ENCODE measurements at regions of chr1 and their contacts with region 1.

Region 1: DNA sequence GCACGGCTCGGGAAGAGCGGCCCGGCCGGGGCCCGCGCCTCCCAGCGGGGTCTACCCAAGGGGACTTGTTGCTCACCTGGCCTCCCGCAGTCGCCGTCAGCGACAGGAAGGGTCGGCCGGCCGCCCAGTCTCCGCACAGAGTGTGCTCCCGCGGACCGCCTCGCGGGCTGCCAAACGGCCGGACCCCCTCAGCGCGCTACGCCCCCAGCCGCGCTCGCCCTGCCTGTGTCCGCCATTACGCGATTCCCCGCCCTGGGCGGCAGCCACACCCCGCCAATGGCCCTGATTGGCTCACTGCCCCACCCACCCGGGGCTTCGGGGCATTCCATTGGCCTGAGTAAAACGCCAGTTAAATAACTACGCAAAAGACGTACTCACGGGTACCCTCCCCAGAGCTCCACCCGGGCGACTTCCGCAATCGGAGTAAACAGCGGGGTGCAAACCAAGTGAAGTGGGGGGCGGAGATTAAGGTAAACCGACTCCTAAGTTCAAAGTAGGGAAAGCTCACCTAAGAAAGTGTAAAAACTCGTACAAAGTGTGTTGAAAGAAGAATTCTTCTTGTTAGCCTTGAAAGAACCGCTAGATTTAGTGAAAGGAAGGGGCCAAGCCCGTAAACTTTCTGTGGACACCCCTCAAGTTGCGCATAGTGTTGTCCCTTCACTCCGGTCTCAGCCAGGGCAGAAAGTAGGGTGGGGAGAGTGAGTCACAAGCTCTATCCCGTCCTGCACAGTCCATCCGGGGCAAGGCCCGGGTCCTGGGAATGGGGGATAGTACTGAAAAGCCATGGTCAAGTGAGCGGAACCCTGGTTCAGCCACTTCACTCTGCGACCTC is at the start of gene WASF2:
- DNase-seq: peak; percentile 93 to 99 (median 98)
- ATAC-seq: peak; percentile 96
- H3K4me3 ChIP-seq: peak within 1 kb of the TSS; percentile 79
- H3K27ac ChIP-seq: peak within 1 kb of the TSS; percentile 99
- H3K4me1 ChIP-seq: peaks cover 8 to 25% of the 10 kb centered on the region in 2 experiments; a peak in 4 of 5 replicates
- H3K27me3 ChIP-seq: no peaks in the 10 kb centered on the region
- CTCF ChIP-seq: no peak; a peak in 1 of 6 replicates
- EP300 ChIP-seq: peak; percentile 5
- POLR2A ChIP-seq: peak; percentile 92
- RAD21 ChIP-seq: 0 out of 4 replicates have a peak, but pooled peaks of 1 of the 2 experiments have one; percentile 13
- polyA plus RNA-seq, gene WASF2: 8.2 to 9.7 TPM

Region 2: DNA sequence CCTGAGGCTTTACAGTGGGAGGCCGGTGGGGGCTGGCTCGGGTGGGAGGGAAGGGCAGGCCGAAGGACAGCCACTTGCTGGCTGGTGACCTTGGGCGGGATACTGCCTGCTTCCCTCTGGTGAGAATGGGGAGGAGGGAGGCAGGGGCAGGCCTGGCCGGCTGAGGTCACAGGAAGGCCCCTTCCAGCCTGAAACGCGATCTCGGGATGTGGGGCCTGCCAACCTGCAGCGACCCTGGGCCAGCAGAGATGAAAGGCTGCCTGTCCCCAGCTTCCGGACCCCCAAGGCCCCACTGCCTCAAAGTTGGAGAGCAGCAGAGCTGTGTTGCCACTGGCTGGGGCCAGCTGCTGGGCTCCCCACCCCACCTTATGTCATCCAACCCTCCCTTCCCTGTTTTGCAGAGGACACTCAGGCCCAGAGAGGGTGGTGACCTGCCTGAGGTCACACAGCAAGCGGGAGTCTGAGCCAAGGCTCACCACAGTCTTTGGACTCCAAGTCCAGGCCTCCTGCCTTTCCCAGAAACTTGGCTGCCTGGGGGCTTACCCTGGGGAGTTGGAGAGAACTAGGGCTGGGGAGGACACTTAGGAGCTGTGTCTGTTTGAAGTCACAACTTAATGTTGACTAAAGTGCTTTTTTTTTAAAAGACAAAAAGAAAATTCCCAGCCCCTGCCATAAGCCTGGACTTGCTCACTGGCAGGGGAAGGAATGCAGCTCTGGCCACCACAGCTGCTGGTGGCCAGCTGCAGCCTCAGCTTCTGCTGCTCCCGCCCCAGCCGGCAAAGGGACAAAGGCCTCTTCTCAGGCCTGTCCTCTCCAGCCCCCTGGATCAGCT is 14.7 kb after region 1 on chr1:
- CTCF ChIA-PET with region 1: no interaction called
- POLR2A ChIA-PET with region 1: interaction called, 17 read pairs
- in situ Hi-C with region 1: no loop called
- intact Hi-C with region 1: loop called (anchors 1 kb)
- DNase-seq: peak; percentile 57 to 69 (median 66)
- ATAC-seq: peak; percentile 53
- H3K4me3 ChIP-seq: no peak overlapping the region
- H3K27ac ChIP-seq: peak overlapping the region; percentile 59
- H3K4me1 ChIP-seq: peaks cover 22 to 30% of the 10 kb centered on the region in 2 experiments; a peak in 4 of 5 replicates
- H3K27me3 ChIP-seq: no peaks in the 10 kb centered on the region
- CTCF ChIP-seq: no peak
- EP300 ChIP-seq: no peak
- POLR2A ChIP-seq: no peak
- RAD21 ChIP-seq: no peak

Region 3: DNA sequence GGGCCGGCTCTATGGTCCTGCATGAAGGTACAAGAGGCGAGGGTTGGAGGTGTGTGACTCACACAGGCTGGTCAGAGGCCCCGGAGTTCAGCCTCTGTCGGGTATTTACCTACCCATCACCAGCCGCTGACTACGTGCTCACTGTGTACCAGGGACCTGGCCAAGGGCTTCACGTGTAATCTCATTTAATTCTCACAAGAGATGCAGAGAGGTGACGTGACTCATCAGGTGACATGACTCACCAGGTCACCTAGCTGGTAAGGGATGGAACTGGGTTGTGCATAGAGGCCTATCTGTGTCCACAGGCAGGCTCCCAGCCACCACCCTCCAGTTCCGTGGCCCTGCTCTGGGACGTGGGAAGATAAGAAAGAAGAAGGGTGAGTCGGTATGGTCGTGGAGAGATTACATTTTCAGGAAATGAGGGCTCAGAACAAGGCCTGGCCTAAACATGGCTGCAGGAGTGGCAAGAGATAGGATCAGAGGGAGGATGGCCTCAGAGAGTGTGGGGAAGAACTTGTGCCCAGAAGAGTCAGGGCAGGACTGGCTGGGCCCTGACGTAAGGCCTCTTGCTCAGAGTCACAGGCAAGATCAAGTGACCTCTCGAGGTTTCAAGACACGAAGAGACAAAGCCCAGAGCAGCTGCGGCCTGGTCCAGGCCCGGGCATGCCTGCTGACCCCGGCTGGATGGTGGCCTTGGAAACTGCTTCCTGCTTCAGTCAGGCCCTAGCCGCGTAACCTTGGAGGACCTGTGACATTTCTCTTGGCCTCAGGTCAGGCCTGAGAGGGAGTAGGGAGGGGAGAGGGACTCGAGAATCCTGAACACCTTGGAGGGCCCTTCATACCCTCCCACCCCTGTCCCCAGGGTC is 52.5 kb after region 1 on chr1:
- CTCF ChIA-PET with region 1: no interaction called
- POLR2A ChIA-PET with region 1: no interaction called
- in situ Hi-C with region 1: no loop called
- intact Hi-C with region 1: no loop called
- DNase-seq: peak; percentile 98 to 100 (median 99)
- ATAC-seq: peak; percentile 93
- H3K4me3 ChIP-seq: no peak overlapping the region
- H3K27ac ChIP-seq: peak overlapping the region; percentile 97
- H3K4me1 ChIP-seq: peaks cover 60 to 79% of the 10 kb centered on the region in 2 experiments
- H3K27me3 ChIP-seq: no peaks in the 10 kb centered on the region
- CTCF ChIP-seq: no peak; a peak in 1 of 6 replicates
- EP300 ChIP-seq: peak; percentile 98
- POLR2A ChIP-seq: peak; percentile 67
- RAD21 ChIP-seq: no peak; a peak in 3 of 4 replicates

Measured in K562 (cell line).